ENCODE measurements at regions of chr16 and their contacts with region 1.

Region 1: GRCh38 chr16:66650707-66651473 is 45.7 kb downstream of the CMTM4 start:
- DNase-seq: peak; percentile 86
- H3K4me3 Mint-ChIP-seq: peak overlapping the region; percentile 58
- H3K27ac Mint-ChIP-seq: no peak overlapping the region
- H3K4me1 Mint-ChIP-seq: peaks cover 10% of the 10 kb centered on the region
- H3K27me3 Mint-ChIP-seq: peaks cover 5% of the 10 kb centered on the region

Region 2: DNA sequence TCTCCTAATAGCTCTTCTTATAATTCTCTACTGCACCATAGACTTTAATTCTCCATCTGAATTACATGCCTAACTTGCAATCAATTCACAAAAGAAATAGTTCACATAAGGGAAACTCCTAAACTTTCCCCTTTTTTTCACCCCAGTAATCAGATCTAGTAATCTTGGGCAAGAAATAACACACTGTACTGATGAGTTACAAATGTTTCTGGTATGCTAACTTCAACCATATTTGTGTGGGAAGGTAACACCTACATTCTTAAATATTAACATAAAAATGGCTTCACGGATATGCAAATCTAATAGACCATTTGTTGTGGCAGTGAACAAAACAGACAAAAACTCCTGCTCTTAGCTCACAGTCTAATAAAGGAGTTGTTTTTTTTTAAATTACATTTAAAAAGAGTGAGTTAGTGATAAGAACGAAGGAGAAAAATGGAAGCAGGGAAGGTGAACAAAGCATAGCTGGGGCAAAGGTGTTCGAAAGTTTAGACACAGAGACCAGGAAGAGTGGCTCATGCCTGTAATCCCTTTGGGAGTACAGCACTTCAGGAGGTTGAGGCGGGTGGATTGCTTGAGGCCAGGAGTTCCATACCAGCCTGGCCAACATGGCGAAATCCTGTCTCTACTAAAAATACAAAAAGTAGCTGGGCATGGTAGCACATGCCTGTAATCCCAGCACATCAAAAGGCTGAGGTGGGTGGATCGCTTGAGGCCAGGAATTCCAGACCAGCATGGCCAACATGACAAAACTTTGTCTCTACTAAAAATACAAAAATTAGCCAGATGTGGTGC is 11.6 kb before region 1 on chr16:
- CTCF ChIA-PET with region 1: interaction called, 28 read pairs
- POLR2A ChIA-PET with region 1: no interaction called
- intact Hi-C with region 1: no loop called
- DNase-seq: no peak
- H3K4me3 Mint-ChIP-seq: no peak overlapping the region
- H3K27ac Mint-ChIP-seq: no peak overlapping the region
- H3K4me1 Mint-ChIP-seq: no peaks in the 10 kb centered on the region
- H3K27me3 Mint-ChIP-seq: no peaks in the 10 kb centered on the region

Measured in activated CD4-positive, alpha-beta memory T cell treated with anti-CD3 and anti-CD28 coated beads for 36 hours (primary cell).